ENCODE measurements at regions of chr11 and their contacts with region 1.

Region 1: DNA sequence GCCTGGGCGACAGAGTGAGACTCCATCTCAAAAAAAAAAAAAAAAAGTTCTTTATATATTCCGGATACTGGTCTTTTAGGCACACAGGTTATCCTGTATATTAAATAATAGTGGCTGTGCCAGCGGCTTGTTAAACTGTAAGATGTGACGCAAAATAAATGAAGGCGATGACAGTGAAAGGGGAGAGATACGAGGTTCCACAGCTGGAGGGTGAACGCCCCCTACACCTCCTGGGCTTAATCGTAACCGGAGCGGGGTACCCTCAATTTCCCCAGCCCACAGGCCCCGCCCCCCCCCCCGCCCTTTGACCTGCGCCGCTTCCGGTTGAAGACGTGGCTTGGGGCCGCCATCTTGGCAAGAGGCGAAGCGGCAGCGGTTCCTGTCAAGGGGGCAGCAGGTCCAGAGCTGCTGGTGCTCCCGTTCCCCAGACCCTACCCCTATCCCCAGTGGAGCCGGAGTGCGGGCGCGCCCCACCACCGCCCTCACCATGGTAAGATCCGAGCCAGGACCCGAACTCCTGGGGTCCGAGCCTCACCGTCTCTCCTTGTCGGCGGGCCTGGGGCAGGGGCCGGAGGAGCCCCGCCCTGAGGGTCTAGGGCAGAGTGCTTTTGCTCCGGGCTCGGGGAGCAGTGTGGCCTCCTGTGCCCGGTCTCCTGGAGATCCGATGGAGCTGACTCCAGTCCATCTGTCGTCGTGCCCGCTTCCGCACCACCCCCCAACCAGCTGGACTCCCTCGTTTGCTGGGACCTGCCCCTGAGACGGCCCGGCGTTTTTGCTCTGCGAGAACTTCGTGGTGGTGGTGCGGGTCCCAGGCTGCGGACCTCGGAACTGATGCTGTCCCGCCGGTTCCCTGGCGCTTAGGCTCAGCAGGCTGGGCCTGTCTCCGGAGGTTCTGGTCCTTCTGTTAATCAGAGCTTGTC is at the start of gene ARCN1:
- DNase-seq: peak; percentile 61
- ATAC-seq: peak; percentile 87
- H3K4me3 ChIP-seq: peak within 1 kb of the TSS; percentile 68 to 97 (median 94)
- H3K27ac ChIP-seq: peak within 1 kb of the TSS; percentile 95
- H3K4me1 ChIP-seq: peaks cover 52% of the 10 kb centered on the region
- H3K27me3 ChIP-seq: no peaks in the 10 kb centered on the region; a peak in 1 of 5 replicates
- CTCF ChIP-seq: peak; percentile 24
- EP300 ChIP-seq: no peak
- POLR2A ChIP-seq: peak; percentile 86 to 92
- RAD21 ChIP-seq: peak; percentile 18; the same call in 1 of the 2 replicates
- total RNA-seq, gene ARCN1: 148 and 215 TPM in 2 replicates

Region 2: DNA sequence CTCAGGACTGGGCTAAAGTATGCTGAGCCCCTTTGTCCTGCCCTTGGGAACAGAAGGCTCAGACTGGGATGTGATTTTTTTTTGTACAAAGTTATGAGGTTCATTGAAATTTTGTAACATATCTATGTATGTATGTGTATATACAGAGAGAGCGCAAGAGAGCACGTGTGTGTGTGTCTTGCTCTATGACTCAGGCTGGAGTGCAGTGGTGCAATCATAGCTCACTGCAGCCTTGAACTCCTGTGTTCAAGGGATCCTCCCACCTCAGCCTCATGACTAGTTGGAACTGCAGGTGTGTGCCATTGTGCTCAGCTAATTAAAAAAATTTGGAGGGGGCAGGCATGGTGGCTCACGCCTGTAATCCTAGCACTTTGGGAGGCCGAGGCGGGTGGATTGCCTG is 35.6 kb before region 1 on chr11:
- CTCF ChIA-PET with region 1: no interaction called
- POLR2A ChIA-PET with region 1: no interaction called
- in situ Hi-C with region 1: loop called (anchors 5 kb)
- intact Hi-C with region 1: loop called (anchors 2 kb)
- DNase-seq: peak; percentile 32
- ATAC-seq: peak; percentile 9; the same call in 2 of the 3 replicates
- H3K4me3 ChIP-seq: no peak overlapping the region
- H3K27ac ChIP-seq: no peak overlapping the region
- H3K4me1 ChIP-seq: peaks cover 33% of the 10 kb centered on the region
- H3K27me3 ChIP-seq: no peaks in the 10 kb centered on the region
- CTCF ChIP-seq: no peak
- EP300 ChIP-seq: no peak
- POLR2A ChIP-seq: no peak
- RAD21 ChIP-seq: no peak

Region 3: GRCh38 chr11:118607401-118608359 is 35.4 kb after region 1 on chr11 and contains the start of gene PHLDB1:
- CTCF ChIA-PET with region 1: no interaction called
- POLR2A ChIA-PET with region 1: interaction called, 9 read pairs
- in situ Hi-C with region 1: no loop called
- intact Hi-C with region 1: loop called (anchors 5 kb)
- DNase-seq: peak; percentile 45
- ATAC-seq: peak; percentile 68
- H3K4me3 ChIP-seq: peak within 1 kb of the TSS; percentile 65 to 84 (median 81)
- H3K27ac ChIP-seq: no peak within 1 kb of the TSS
- H3K4me1 ChIP-seq: peaks cover 39% of the 10 kb centered on the region
- H3K27me3 ChIP-seq: peaks cover 0 to 6% of the 10 kb centered on the region in 2 experiments; a peak in 1 of 5 replicates
- CTCF ChIP-seq: peak; percentile 72
- EP300 ChIP-seq: no peak
- POLR2A ChIP-seq: no peak
- RAD21 ChIP-seq: no peak
- total RNA-seq, gene PHLDB1: 9.9 and 13.8 TPM in 2 replicates

Measured in HepG2 (cell line).